K562 (cell line): ENCODE measurements at regions of chr19 and their contacts with region 1.

Region 1: GRCh38 chr19:46265217-46265828 is 31.5 kb upstream of the HIF3A start:
- DNase-seq: peak; percentile 71 to 83 (median 73)
- ATAC-seq: peak; percentile 96
- H3K4me3 ChIP-seq: no peak overlapping the region
- H3K27ac ChIP-seq: no peak overlapping the region
- H3K4me1 ChIP-seq: peaks cover 0 to 2% of the 10 kb centered on the region in 2 experiments; a peak in 1 of 5 replicates
- H3K27me3 ChIP-seq: peaks cover 5 to 18% of the 10 kb centered on the region in 2 experiments
- CTCF ChIP-seq: peak; percentile 86 to 96 (median 96)
- EP300 ChIP-seq: no peak
- POLR2A ChIP-seq: no peak
- RAD21 ChIP-seq: peak; percentile 89 to 91

Region 2: DNA sequence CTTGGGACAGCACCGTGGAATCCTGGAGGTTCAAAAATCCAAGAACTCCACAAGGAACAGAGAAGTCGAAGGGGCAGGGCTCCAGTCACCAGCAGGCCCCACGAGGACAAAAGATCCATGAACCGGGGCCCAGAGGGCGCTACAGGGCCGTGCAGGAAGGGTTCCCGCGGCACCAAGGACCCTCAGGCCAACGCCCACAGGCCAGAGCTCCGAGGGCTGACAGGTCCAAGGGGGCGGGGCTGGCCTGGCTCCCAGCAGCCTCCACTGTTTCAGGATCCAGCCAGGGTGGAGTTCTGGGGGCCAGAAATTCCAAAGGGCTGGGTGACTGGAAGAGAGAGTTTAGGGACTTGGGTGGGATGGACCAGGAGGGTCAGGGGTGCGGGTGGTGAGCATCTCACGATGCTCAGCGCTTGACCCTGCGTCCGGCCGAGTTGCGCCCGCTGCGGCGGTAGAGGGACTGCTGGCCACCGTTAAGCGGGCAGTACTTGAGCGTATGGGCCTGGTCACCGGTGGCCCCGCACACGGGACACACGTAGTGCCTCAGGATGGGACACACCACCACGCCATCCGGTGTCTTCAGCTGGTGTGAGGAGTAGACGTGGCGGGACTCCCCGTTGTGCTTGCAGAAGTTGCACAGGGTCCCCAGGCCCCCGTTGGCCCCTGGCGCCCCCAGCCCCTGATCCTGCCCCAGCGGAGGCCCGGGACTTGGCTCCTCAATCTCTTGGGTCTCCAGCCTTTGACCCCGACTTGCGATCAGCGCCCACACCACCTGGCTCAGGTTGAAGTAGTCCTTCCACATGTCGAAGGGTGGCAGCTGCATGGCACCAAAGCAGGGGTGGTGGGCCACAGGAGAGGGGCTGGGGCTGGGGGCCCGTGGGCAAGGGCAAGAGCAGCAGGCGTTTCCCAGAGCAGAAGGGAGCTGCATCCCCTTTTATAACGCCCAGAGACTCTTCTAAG is 351.2 kb before region 1 on chr19 and contains the start of gene NANOS2:
- CTCF ChIA-PET with region 1: no interaction called
- POLR2A ChIA-PET with region 1: no interaction called
- in situ Hi-C with region 1: loop called (anchors 10 kb)
- intact Hi-C with region 1: no loop called
- DNase-seq: peak; percentile 72 to 82 (median 78)
- ATAC-seq: peak; percentile 96
- H3K4me3 ChIP-seq: no peak within 1 kb of the TSS
- H3K27ac ChIP-seq: no peak within 1 kb of the TSS
- H3K4me1 ChIP-seq: peaks cover 0 to 9% of the 10 kb centered on the region in 2 experiments; a peak in 2 of 5 replicates
- H3K27me3 ChIP-seq: peaks cover 11 to 20% of the 10 kb centered on the region in 2 experiments; a peak in 3 of 5 replicates
- CTCF ChIP-seq: peak; percentile 61 to 85 (median 64)
- EP300 ChIP-seq: no peak
- POLR2A ChIP-seq: no peak
- RAD21 ChIP-seq: peak in 1 of 2 experiments; percentile 62; a peak in 2 of 4 replicates
- polyA plus RNA-seq, gene NANOS2: not detected

Region 3: DNA sequence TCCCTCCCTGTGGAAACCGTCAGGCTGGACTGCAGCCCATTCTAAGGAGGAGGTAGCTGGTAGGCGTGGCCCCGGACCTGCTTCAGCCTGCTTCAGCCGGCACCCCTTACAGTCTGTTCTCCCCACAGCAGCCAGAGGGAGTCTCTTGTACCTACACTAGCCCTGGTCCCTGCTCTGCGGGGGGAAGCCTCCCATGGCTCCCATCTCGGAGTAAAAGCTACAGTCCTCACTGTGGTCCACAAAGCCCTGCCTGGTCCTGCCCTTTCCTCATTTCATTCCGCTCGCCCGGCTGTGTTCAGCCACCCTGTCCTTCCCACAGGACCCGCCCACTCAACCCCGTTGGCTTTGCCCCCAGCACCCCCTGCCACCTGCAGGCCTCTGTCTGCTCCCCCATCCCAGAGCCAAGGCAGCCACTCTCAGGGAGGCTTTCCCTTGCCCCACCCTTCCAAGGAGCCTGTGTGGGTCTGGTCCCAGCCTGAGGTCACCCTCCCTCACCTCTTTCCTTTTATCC is 243.7 kb before region 1 on chr19:
- CTCF ChIA-PET with region 1: no interaction called
- POLR2A ChIA-PET with region 1: no interaction called
- in situ Hi-C with region 1: loop called (anchors 5 kb)
- intact Hi-C with region 1: no loop called
- DNase-seq: peak; percentile 44 to 63 (median 56)
- ATAC-seq: peak; percentile 92
- H3K4me3 ChIP-seq: no peak overlapping the region
- H3K27ac ChIP-seq: no peak overlapping the region
- H3K4me1 ChIP-seq: peaks cover 8 to 29% of the 10 kb centered on the region in 2 experiments; a peak in 4 of 5 replicates
- H3K27me3 ChIP-seq: no peaks in the 10 kb centered on the region
- CTCF ChIP-seq: peak; percentile 44 to 51 (median 48)
- EP300 ChIP-seq: no peak
- POLR2A ChIP-seq: no peak
- RAD21 ChIP-seq: no peak

Region 4: GRCh38 chr19:46030812-46031550 is 234.3 kb before region 1 on chr19:
- CTCF ChIA-PET with region 1: interaction called, 43 read pairs
- POLR2A ChIA-PET with region 1: interaction called, 5 read pairs
- in situ Hi-C with region 1: loop called (anchors 5 kb)
- intact Hi-C with region 1: loop called (anchors 1 kb)
- DNase-seq: no peak
- ATAC-seq: no peak
- H3K4me3 ChIP-seq: no peak overlapping the region
- H3K27ac ChIP-seq: no peak overlapping the region
- H3K4me1 ChIP-seq: no peaks in the 10 kb centered on the region
- H3K27me3 ChIP-seq: peaks cover 2 to 21% of the 10 kb centered on the region in 2 experiments; a peak in 2 of 5 replicates
- CTCF ChIP-seq: no peak
- EP300 ChIP-seq: no peak
- POLR2A ChIP-seq: no peak
- RAD21 ChIP-seq: no peak

Region 5: DNA sequence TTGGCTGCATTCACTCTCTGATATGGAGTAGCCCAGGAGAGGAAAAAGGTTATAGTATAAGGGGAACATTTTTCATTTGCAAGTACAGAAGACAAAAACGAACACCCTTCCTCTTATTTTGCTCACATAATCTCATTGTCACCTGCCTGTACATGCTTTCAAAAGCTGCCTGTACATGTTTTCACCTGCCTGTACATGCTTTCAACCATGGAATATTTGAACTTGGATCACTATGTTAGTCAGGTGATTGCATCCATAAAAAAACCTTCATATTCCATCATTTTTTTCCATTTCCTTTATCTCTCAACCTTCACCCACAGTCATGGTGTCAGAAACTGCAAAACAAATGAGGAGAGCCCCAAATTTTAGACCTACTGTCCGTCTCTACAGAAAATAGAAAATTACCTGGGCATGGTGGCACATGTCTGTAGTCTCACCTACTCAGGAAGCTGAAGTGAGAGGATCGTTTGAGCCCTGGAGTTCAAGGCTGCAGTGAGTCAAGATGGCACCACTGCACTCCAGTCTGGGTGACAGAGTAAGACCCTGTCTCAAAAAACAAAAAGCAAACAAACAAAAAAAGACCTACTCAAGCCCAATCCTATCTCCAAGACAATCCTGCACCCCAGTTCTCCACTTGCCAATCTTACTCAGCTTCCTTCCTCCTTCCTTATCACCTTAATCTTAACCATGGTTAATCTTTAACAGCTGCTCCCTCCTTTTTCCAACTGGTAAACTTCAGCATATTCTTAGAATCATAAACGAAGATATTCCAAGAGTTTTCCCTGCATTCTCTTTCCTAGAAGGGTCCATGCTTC is 105.7 kb before region 1 on chr19:
- CTCF ChIA-PET with region 1: no interaction called
- POLR2A ChIA-PET with region 1: no interaction called
- in situ Hi-C with region 1: no loop called
- intact Hi-C with region 1: no loop called
- DNase-seq: no peak
- ATAC-seq: no peak
- H3K4me3 ChIP-seq: no peak overlapping the region
- H3K27ac ChIP-seq: no peak overlapping the region
- H3K4me1 ChIP-seq: no peaks in the 10 kb centered on the region; a peak in 2 of 5 replicates
- H3K27me3 ChIP-seq: peaks cover 4 to 6% of the 10 kb centered on the region in 2 experiments; a peak in 3 of 5 replicates
- CTCF ChIP-seq: no peak
- EP300 ChIP-seq: no peak
- POLR2A ChIP-seq: no peak
- RAD21 ChIP-seq: no peak